ENCODE measurements at regions of chrX and their contacts with region 1.

Region 1: GRCh38 chrX:154013614-154014360 is 5.9 kb downstream of the IRAK1 start:
- DNase-seq: no peak
- H3K4me3 ChIP-seq: no peak overlapping the region
- H3K27ac ChIP-seq: no peak overlapping the region
- H3K4me1 ChIP-seq: no peaks in the 10 kb centered on the region
- H3K27me3 ChIP-seq: no peaks in the 10 kb centered on the region
- CTCF ChIP-seq: peak; percentile 58 to 81 (median 80)
- POLR2A ChIP-seq: no peak

Region 2: DNA sequence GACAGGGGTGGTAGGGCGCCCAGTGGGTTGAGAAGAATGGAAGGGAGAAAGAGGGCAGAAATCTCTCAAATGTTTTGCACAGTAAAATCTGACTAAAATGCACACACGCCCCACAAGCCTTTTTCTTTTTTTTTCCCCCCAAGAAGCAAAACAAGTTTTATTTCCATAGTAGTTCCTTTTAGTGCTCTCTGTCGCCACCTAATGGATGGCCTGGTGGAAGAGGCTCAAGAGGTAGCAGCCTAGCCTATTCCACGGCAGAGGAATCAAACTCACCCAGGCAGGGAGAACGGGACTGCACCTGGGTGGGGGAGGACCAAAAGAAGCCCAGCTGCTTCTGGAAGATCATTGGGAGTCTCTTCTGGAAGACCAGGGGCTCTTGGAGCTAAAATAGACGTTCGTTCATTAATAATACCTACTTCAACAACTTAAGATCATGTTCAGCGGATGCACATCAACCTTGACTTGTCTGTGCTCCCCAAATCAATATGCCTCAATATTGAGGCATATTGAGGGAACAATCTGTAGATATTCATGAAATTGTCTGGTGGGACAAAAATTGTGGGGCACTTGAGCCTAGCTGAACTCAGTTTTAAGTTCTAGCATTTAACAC is 37.5 kb after region 1 on chrX:
- intact Hi-C with region 1: loop called (anchors 2 kb)
- DNase-seq: peak; percentile 74
- H3K4me3 ChIP-seq: no peak overlapping the region
- H3K27ac ChIP-seq: peak overlapping the region; percentile 54 to 74
- H3K4me1 ChIP-seq: no peaks in the 10 kb centered on the region
- H3K27me3 ChIP-seq: no peaks in the 10 kb centered on the region
- CTCF ChIP-seq: peak; percentile 23 to 66 (median 56)
- POLR2A ChIP-seq: no peak

Measured in prostate gland (tissue), 2 donors.